SK-N-SH (cell line): ENCODE measurements at regions of chr2 and their contacts with region 1.

Region 1: GRCh38 chr2:231713730-231714430 is 5.6 kb downstream of the PTMA start:
- DNase-seq: peak; percentile 88
- H3K4me3 ChIP-seq: no peak overlapping the region
- H3K27ac ChIP-seq: peak overlapping the region; percentile 50 to 56
- H3K4me1 ChIP-seq: peaks cover 20 to 32% of the 10 kb centered on the region in 2 experiments; a peak in 3 of 4 replicates
- H3K27me3 ChIP-seq: no peaks in the 10 kb centered on the region
- CTCF ChIP-seq: peak; percentile 95
- EP300 ChIP-seq: no peak; a peak in 1 of 4 replicates
- RAD21 ChIP-seq: peak; percentile 61

Region 2: DNA sequence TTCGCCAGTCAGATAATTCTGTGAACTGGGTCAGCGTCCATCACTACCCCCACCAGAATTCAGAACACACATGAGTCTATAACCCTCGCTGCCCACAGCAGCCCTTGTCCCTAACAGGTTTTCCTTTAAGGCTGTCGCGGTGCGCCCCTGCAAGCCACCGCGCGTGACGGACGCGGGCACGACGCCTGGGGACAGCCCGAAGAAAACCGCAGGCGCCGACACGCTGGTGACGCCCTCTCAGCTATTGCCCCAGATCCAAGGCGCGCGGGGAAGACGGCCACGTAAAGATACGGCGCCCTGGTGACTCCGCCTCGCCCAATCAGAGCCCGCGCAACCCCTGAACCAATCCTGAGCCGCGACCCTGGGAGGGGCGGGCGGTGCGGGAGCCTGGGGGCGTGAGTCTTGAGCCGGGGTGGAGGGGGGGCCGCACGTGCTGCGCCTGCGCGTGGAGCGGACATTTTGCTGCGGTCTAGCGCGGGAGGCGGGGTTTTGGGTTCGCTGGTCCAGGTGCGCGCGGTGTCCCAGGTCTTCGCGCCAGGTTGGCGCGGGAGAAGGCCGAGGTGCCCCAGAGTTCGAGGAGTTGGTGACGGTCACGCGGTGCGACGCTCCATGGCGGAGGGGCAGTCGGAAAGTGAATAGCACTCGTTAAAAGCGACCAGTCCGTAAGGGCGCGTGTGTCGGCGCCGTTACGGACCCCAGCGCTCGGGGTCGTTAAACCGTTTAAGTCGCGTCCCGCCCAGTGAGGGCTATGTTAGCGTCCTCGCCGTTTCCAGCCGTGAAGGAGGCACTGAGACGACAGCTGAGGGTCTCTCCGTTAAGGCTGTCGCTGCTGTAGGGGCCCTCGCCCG is 199.6 kb before region 1 on chr2:
- CTCF ChIA-PET with region 1: interaction called, 12 read pairs
- POLR2A ChIA-PET with region 1: no interaction called
- DNase-seq: peak; percentile 100
- H3K4me3 ChIP-seq: peak overlapping the region; percentile 86 to 89
- H3K27ac ChIP-seq: peak overlapping the region; percentile 58 to 86
- H3K4me1 ChIP-seq: peaks cover 0 to 5% of the 10 kb centered on the region in 2 experiments; a peak in 2 of 4 replicates
- H3K27me3 ChIP-seq: no peaks in the 10 kb centered on the region
- CTCF ChIP-seq: no peak
- EP300 ChIP-seq: no peak
- RAD21 ChIP-seq: no peak

Region 3: GRCh38 chr2:231612179-231613053 is 101.5 kb before region 1 on chr2:
- CTCF ChIA-PET with region 1: interaction called, 109 read pairs
- POLR2A ChIA-PET with region 1: interaction called, 10 read pairs
- DNase-seq: peak; percentile 93
- H3K4me3 ChIP-seq: peak overlapping the region in 1 of 2 experiments; percentile 40; a peak in 1 of 4 replicates
- H3K27ac ChIP-seq: peak overlapping the region in 1 of 2 experiments; percentile 89; a peak in 3 of 4 replicates
- H3K4me1 ChIP-seq: peaks cover 24 to 26% of the 10 kb centered on the region in 2 experiments; a peak in 3 of 4 replicates
- H3K27me3 ChIP-seq: no peaks in the 10 kb centered on the region
- CTCF ChIP-seq: peak; percentile 97
- EP300 ChIP-seq: peak in 1 of 2 experiments; percentile 27; a peak in 1 of 4 replicates
- RAD21 ChIP-seq: peak; percentile 85

Region 4: GRCh38 chr2:231655897-231656296 is 58.0 kb before region 1 on chr2:
- CTCF ChIA-PET with region 1: interaction called, 37 read pairs
- POLR2A ChIA-PET with region 1: interaction called, 3 read pairs
- DNase-seq: peak; percentile 74
- H3K4me3 ChIP-seq: no peak overlapping the region
- H3K27ac ChIP-seq: peak overlapping the region in 1 of 2 experiments; percentile 56; a peak in 2 of 4 replicates
- H3K4me1 ChIP-seq: peaks cover 0 to 13% of the 10 kb centered on the region in 2 experiments; a peak in 1 of 4 replicates
- H3K27me3 ChIP-seq: no peaks in the 10 kb centered on the region
- CTCF ChIP-seq: no peak
- EP300 ChIP-seq: no peak; a peak in 1 of 4 replicates
- RAD21 ChIP-seq: no peak

Region 5: DNA sequence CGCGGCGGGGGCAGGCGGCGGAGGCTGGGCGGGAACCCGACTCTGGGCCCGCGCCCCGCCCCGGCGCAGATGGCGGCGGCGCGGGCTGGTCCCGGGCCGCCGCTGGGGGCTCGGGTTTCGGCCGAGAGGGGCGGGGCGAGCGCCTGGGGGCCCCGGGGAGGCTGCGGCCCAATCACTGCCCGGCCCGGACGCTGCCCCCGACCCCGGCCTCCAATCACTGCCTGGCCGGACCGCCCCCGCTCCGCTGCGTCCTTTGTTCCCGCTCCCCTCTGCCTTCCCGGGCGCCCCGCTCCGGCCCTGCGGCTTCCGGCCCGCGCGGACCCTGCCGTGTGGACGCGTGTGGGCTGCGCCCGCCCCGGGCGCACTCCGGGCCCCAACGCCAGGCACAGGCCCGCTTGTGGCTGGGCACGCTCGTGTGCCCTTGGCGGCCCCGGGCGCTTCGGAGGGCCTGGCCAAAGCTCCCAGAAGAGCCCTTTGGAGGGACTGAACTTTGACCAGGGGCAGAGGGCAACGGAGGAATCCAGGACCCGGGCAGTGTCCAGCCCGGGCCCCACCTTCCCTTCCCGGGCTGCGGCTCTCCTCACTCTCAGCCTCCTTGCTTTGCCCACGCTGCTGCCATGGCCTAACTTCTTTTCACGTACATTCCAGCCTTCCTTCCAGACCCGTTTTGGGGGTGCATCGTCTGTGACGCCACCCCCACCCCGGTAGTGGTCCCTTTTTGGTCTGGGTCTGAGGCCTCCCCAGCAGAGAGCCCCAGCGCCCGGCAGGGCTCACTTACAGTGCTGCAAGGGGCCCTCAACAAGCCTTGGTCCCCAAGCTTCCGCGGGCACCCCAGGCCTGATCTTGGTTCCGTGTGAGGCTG is 32.7 kb before region 1 on chr2:
- CTCF ChIA-PET with region 1: interaction called, 1,218 read pairs
- POLR2A ChIA-PET with region 1: interaction called, 38 read pairs
- DNase-seq: peak; percentile 99
- H3K4me3 ChIP-seq: peak overlapping the region; percentile 54 to 57; a peak in 3 of 4 replicates
- H3K27ac ChIP-seq: peak overlapping the region; percentile 54 to 84
- H3K4me1 ChIP-seq: peaks cover 0 to 16% of the 10 kb centered on the region in 2 experiments; a peak in 1 of 4 replicates
- H3K27me3 ChIP-seq: no peaks in the 10 kb centered on the region
- CTCF ChIP-seq: no peak
- EP300 ChIP-seq: no peak
- RAD21 ChIP-seq: no peak

Region 6: GRCh38 chr2:231732604-231733003 is 18.7 kb after region 1 on chr2:
- CTCF ChIA-PET with region 1: interaction called, 29 read pairs
- POLR2A ChIA-PET with region 1: interaction called, 5 read pairs
- DNase-seq: no peak
- H3K4me3 ChIP-seq: no peak overlapping the region
- H3K27ac ChIP-seq: no peak overlapping the region
- H3K4me1 ChIP-seq: no peaks in the 10 kb centered on the region
- H3K27me3 ChIP-seq: no peaks in the 10 kb centered on the region
- CTCF ChIP-seq: no peak
- EP300 ChIP-seq: no peak
- RAD21 ChIP-seq: no peak

Region 7: GRCh38 chr2:231795291-231796040 is 81.6 kb after region 1 on chr2:
- CTCF ChIA-PET with region 1: interaction called, 17 read pairs
- POLR2A ChIA-PET with region 1: interaction called, 9 read pairs
- DNase-seq: peak; percentile 78
- H3K4me3 ChIP-seq: no peak overlapping the region
- H3K27ac ChIP-seq: peak overlapping the region; percentile 2 to 91; a peak in 3 of 4 replicates
- H3K4me1 ChIP-seq: peaks cover 0 to 29% of the 10 kb centered on the region in 2 experiments; a peak in 2 of 4 replicates
- H3K27me3 ChIP-seq: no peaks in the 10 kb centered on the region
- CTCF ChIP-seq: peak; percentile 63
- EP300 ChIP-seq: peak in 1 of 2 experiments; percentile 71; a peak in 2 of 4 replicates
- RAD21 ChIP-seq: peak; percentile 28; the same call in 1 of the 2 replicates